Activated CD8-positive, alpha-beta memory T cell treated with anti-CD3 and anti-CD28 coated beads, Interleukin-2, amount 10 ng/mL, durations not matched to agents 7 days and 5 days (primary cell): ENCODE measurements at regions of chr17 and their contacts with region 1.

Region 1: GRCh38 chr17:82892899-82893565 is 53.2 kb upstream of the ZNF750 start:
- DNase-seq: peak; percentile 90
- ATAC-seq: peak; percentile 91
- H3K4me3 Mint-ChIP-seq: peak overlapping the region; percentile 63
- H3K27ac Mint-ChIP-seq: peak overlapping the region; percentile 88
- H3K4me1 Mint-ChIP-seq: peaks cover 36% of the 10 kb centered on the region
- H3K27me3 Mint-ChIP-seq: no peaks in the 10 kb centered on the region

Region 2: GRCh38 chr17:82917691-82918345 is 24.8 kb after region 1 on chr17:
- CTCF ChIA-PET with region 1: interaction called, 11 read pairs
- DNase-seq: peak; percentile 58
- ATAC-seq: peak; percentile 74
- H3K4me3 Mint-ChIP-seq: no peak overlapping the region
- H3K27ac Mint-ChIP-seq: no peak overlapping the region
- H3K4me1 Mint-ChIP-seq: peaks cover 22% of the 10 kb centered on the region
- H3K27me3 Mint-ChIP-seq: no peaks in the 10 kb centered on the region

Region 3: GRCh38 chr17:82946802-82947626 is 54.0 kb after region 1 on chr17:
- CTCF ChIA-PET with region 1: no interaction called
- DNase-seq: no peak
- ATAC-seq: no peak
- H3K4me3 Mint-ChIP-seq: no peak overlapping the region
- H3K27ac Mint-ChIP-seq: no peak overlapping the region
- H3K4me1 Mint-ChIP-seq: no peaks in the 10 kb centered on the region
- H3K27me3 Mint-ChIP-seq: no peaks in the 10 kb centered on the region